Naive thymus-derived CD8-positive, alpha-beta T cell (primary cell): ENCODE measurements at regions of chr2 and their contacts with region 1.

Region 1: GRCh38 chr2:27370026-27370815 is at the starts of genes EIF2B4 and SNX17:
- DNase-seq: peak; percentile 96 to 99 (median 99)
- ATAC-seq: peak; percentile 91 to 93
- H3K4me3 Mint-ChIP-seq: peak within 1 kb of the TSS; percentile 84 to 100 (median 96)
- H3K27ac Mint-ChIP-seq: peak within 1 kb of the TSS; percentile 92 to 99 (median 97)
- H3K4me1 Mint-ChIP-seq: peaks cover 26 to 43% (median 42%) of the 10 kb centered on the region in 4 donors
- H3K27me3 Mint-ChIP-seq: no peaks in the 10 kb centered on the region
- polyA plus RNA-seq, gene EIF2B4: 26.4 to 41.2 (median 30.0) TPM
- polyA plus RNA-seq, gene SNX17: 200 to 217 (median 215) TPM

Region 2: GRCh38 chr2:27308359-27308881 is 61.8 kb before region 1 on chr2 and contains the start of gene UCN:
- POLR2A ChIA-PET with region 1: no interaction called
- DNase-seq: no peak
- ATAC-seq: no peak
- H3K4me3 Mint-ChIP-seq: peak within 1 kb of the TSS in 7 of 10 donors; percentile 28 to 75 (median 48)
- H3K27ac Mint-ChIP-seq: peak within 1 kb of the TSS in 1 of 10 donors; percentile 8
- H3K4me1 Mint-ChIP-seq: peaks cover 8 to 13% (median 9%) of the 10 kb centered on the region in 4 donors
- H3K27me3 Mint-ChIP-seq: peaks cover 8 to 32% (median 13%) of the 10 kb centered on the region in 5 donors
- polyA plus RNA-seq, gene UCN: 0.54 to 1.3 (median 1.2) TPM

Region 3: DNA sequence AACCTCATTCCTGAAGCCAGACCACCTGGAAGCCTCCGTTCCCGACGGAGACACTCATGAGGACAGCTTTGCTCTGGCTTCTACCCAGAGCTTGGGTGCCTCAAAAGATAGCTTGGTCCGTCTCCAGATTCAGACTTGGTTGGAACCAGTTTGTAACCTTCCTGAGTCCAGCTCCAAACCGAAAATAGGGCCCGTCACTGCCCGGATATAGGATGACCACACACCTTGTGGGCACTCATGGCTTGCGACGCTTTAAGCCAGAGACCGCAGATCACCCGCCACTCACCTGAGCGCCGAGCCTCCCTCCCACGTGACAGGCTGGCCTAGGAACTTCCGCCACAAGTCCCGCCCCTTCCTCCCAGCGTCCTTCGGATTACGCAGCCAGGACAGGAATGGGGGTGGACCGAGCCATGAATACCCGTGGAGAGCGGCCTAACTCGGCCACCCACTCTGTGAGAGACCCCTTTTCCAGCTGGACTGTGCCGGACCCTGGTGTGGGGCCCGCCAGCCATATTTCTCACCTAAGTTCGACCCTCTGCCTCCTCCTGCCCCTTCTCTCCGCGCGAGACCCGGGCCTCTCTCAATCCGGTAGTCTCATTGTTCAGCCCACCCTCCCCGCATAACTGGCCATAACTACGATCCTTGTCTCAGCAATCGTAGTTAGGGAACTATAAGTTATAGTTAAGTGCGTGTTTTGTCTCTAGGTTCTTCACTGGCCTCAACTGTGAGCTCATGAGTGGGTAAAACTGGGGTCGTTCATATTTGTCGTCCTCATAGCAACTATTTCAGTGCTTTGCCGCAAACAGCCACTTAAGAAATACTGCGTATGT is 47.2 kb before region 1 on chr2 and contains the start of gene MPV17:
- POLR2A ChIA-PET with region 1: interaction called, 30 read pairs
- DNase-seq: peak; percentile 70 to 94 (median 81)
- ATAC-seq: peak; percentile 95 to 97
- H3K4me3 Mint-ChIP-seq: peak within 1 kb of the TSS; percentile 91 to 100 (median 98)
- H3K27ac Mint-ChIP-seq: peak within 1 kb of the TSS; percentile 97 to 100 (median 99)
- H3K4me1 Mint-ChIP-seq: peaks cover 12 to 32% (median 31%) of the 10 kb centered on the region in 4 donors
- H3K27me3 Mint-ChIP-seq: no peaks in the 10 kb centered on the region
- polyA plus RNA-seq, gene MPV17: 110 to 135 (median 124) TPM

Region 4: DNA sequence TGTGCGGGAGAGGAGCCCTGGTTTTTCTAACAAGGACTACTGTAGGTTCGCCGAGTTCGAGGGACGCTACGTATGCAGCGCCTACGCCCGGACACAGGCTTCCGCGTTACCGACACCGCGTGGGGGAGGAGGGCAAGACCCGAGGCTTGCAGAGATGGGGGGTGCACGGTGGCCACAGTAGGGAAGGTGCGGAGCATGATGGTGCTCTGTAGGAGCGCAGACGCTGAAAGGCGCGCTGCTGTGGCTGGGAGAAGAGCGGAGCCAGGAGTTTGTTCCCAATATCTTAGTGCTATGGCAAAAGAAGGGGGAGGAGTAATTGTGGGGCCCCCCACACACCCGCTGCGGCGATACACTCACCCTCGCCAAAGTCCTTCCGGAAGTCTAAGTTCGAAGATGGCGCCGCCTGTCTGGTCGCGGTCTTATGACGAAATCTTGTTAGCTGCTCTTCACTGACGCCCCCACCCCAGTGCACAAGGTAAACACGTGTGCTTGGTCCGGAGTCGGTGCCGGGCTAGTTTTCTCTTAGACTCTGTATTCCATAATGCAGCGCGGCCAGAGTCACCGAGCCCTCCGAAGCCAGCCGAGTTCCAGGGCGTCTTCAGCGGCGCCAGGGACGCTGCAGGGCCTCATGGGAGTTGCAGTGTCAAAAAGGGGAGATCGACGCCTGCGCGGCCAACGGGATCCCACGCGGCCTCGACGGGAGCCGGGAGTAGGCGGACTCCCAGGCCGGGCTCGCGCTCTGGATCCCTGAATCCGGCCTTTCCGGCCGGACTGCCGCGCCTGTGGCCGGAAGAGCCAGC is 13.6 kb before region 1 on chr2 and contains the start of gene GTF3C2:
- POLR2A ChIA-PET with region 1: interaction called, 55 read pairs
- DNase-seq: peak; percentile 76 to 98 (median 90)
- ATAC-seq: peak; percentile 82
- H3K4me3 Mint-ChIP-seq: peak within 1 kb of the TSS; percentile 96 to 100 (median 98)
- H3K27ac Mint-ChIP-seq: peak within 1 kb of the TSS; percentile 97 to 100 (median 99)
- H3K4me1 Mint-ChIP-seq: peaks cover 19 to 63% (median 52%) of the 10 kb centered on the region in 4 donors
- H3K27me3 Mint-ChIP-seq: no peaks in the 10 kb centered on the region
- polyA plus RNA-seq, gene GTF3C2: 26.2 to 46.1 (median 31.3) TPM

Region 5: GRCh38 chr2:27390822-27391679 is 20.8 kb after region 1 on chr2:
- POLR2A ChIA-PET with region 1: no interaction called
- DNase-seq: peak in 1 of 10 donors; percentile 25
- ATAC-seq: peak in 1 of 2 donors; percentile 66
- H3K4me3 Mint-ChIP-seq: peak overlapping the region in 5 of 10 donors; percentile 37 to 62 (median 44)
- H3K27ac Mint-ChIP-seq: peak overlapping the region in 9 of 10 donors; percentile 52 to 89 (median 80)
- H3K4me1 Mint-ChIP-seq: peaks cover 11 to 36% (median 25%) of the 10 kb centered on the region in 4 donors
- H3K27me3 Mint-ChIP-seq: no peaks in the 10 kb centered on the region